ENCODE measurements at regions of chr14 and their contacts with region 1.

Region 1: DNA sequence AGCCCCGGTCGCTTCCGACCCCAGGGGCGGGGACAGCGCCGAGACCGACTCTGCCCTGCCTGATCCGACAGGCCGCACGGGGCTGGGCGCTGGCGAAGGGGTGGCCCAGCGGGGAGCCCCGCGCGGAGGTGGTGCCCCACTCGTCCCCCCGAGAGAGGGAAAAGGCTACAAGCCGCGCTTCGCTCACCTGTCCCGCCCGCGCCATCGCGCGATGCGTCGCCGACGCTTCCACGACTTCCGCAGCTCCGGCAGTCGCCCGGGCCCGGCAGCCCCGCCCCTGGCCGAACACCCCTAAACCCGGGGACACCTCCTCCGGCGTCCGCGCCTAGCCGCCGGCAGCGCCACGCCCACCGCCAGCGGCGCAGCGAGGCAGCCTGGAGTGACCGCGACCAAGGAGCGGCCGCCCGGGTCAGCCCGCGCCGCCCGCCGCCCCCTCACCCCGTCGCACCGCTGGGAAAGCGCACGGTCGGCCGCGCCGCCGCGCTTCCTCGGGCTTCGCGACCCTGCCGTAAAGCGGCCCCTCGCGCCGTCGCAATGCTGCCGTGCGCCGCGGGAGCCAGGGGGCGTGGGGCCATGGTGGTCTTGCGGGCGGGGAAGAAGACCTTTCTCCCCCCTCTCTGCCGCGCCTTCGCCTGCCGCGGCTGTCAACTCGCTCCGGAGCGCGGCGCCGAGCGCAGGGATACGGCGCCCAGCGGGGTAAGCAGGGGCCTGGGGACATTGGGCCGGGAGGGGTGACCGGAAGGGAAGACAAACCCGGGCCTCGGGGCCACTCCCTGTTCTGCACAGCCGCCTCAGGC is at the starts of genes BAG5 and COA8:
- DNase-seq: peak; percentile 61 to 92
- H3K4me3 ChIP-seq: peak within 1 kb of the TSS; percentile 82 to 97 (median 91)
- H3K27ac ChIP-seq: peak within 1 kb of the TSS; percentile 94
- H3K4me1 ChIP-seq: peaks cover 0 to 4% (median 1%) of the 10 kb centered on the region in 4 experiments; a peak in 3 of 7 replicates
- H3K27me3 ChIP-seq: no peaks in the 10 kb centered on the region
- CTCF ChIP-seq: no peak
- EP300 ChIP-seq: no peak
- POLR2A ChIP-seq: peak; percentile 28 to 76
- RAD21 ChIP-seq: no peak
- total RNA-seq, gene BAG5: 29.2 and 29.5 TPM in 2 replicates
- total RNA-seq, gene COA8: 35.0 and 35.5 TPM in 2 replicates

Region 2: GRCh38 chr14:103512701-103513611 is 49.7 kb before region 1 on chr14:
- CTCF ChIA-PET with region 1: interaction called, 14 read pairs
- POLR2A ChIA-PET with region 1: interaction called, 7 read pairs
- DNase-seq: no peak
- H3K4me3 ChIP-seq: no peak overlapping the region
- H3K27ac ChIP-seq: no peak overlapping the region
- H3K4me1 ChIP-seq: peaks cover 0 to 3% (median 2%) of the 10 kb centered on the region in 4 experiments; a peak in 3 of 7 replicates
- H3K27me3 ChIP-seq: no peaks in the 10 kb centered on the region
- CTCF ChIP-seq: peak in 1 of 3 experiments; percentile 3; a peak in 1 of 4 replicates
- EP300 ChIP-seq: no peak
- POLR2A ChIP-seq: no peak; a peak in 1 of 3 replicates
- RAD21 ChIP-seq: peak; percentile 3 to 7; a peak in 1 of 4 replicates

Region 3: DNA sequence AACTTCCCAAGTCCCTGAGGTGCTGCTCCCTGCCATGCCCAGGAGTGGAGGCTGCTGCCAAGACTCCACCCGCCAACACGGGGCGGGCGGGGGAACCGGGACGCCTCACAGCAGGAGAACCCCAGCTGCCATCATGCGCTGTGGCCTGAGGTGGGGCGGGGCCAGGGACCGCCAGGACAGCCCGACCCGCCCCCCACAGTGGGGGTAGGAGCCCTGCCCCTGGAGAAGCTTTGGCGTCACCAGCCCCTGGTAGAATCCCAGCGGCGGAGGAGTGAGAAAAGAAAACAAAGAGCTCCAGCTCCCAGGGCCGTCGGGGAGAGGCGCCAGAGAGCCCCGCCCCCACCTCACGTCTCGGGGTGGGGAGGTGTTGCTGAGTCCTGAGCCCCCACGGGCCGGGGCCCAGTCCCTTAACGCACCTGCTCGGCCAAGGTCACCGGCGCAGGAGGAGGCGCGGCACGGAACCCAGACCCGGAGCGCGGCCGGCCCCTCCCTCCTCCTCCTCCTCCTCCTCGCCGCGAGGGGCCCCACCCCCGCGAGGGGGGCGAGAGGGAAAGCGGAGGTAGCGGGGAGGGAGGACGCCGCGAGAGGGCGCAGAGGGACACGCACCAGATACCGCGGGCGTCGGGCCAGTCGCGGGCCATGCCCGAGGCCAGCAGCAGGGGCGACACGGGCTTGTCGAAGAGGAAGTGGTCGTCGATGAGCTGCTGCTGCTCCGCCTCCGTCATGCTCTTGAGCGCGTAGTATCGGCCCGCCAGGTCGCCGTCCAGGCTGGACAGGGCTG is 41.8 kb before region 1 on chr14:
- CTCF ChIA-PET with region 1: interaction called, 14 read pairs
- POLR2A ChIA-PET with region 1: interaction called, 40 read pairs
- DNase-seq: peak in 1 of 2 experiments; percentile 86
- H3K4me3 ChIP-seq: peak overlapping the region; percentile 47 to 96 (median 84)
- H3K27ac ChIP-seq: no peak overlapping the region
- H3K4me1 ChIP-seq: peaks cover 0 to 28% (median 19%) of the 10 kb centered on the region in 4 experiments; a peak in 6 of 7 replicates
- H3K27me3 ChIP-seq: peaks cover 3 to 18% (median 13%) of the 10 kb centered on the region in 4 experiments
- CTCF ChIP-seq: peak in 2 of 3 experiments; percentile 61 to 66; a peak in 3 of 4 replicates
- EP300 ChIP-seq: no peak
- POLR2A ChIP-seq: peak in 1 of 2 experiments; percentile 59; a peak in 1 of 3 replicates
- RAD21 ChIP-seq: peak; percentile 23 to 47; a peak in 3 of 4 replicates

Region 4: DNA sequence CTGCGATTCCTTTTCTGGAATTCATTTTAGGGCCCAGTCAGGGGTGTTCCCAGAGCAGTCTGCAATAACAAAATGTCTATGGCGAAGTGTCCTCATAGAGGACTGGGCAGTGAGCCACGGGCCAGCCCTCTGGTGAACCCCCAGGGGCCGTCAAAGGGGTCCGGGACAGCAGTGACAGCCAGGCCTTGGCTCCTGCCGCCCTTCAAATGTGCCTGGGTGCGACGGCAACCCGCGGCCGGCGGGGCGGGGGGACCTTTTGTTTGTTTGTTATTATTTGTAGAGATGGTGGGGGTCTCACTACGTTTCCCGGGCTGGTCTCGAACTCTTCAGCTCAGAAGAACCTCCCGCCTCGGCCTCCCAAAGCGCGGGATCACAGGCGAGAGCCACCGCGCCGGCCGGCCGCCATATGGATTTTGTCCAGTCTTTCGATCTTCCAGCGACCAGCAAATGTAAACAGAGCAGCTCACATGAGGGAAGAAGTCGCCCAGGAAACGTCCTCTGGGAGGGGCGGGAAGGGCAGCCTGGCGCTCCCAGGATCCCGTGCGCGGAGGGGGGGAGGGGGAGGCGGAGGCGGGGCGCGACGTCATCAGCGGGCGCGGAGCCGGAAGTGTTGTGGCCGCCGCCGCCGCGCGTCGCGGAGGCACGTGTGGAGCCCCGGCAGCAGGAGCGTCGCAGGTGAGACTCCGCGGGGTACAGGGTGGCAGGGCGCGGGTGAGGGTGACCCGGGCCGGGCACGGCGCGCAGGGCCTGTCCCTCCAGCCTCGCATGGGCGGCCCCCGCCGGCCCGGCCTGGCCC is 33.8 kb before region 1 on chr14 and contains the start of gene TRMT61A:
- CTCF ChIA-PET with region 1: interaction called, 3 read pairs
- POLR2A ChIA-PET with region 1: interaction called, 40 read pairs
- DNase-seq: peak in 1 of 2 experiments; percentile 83
- H3K4me3 ChIP-seq: peak within 1 kb of the TSS; percentile 61 to 97 (median 94)
- H3K27ac ChIP-seq: peak within 1 kb of the TSS; percentile 71; the same call in 1 of the 2 replicates
- H3K4me1 ChIP-seq: peaks cover 0 to 12% (median 10%) of the 10 kb centered on the region in 4 experiments; a peak in 6 of 7 replicates
- H3K27me3 ChIP-seq: peaks cover 2 to 16% (median 7%) of the 10 kb centered on the region in 4 experiments
- CTCF ChIP-seq: no peak
- EP300 ChIP-seq: no peak
- POLR2A ChIP-seq: peak in 1 of 2 experiments; percentile 59; a peak in 1 of 3 replicates
- RAD21 ChIP-seq: no peak
- total RNA-seq, gene TRMT61A: 15.1 and 15.8 TPM in 2 replicates

Region 5: GRCh38 chr14:103546652-103547454 is 15.8 kb before region 1 on chr14:
- CTCF ChIA-PET with region 1: interaction called, 34 read pairs
- POLR2A ChIA-PET with region 1: interaction called, 27 read pairs
- DNase-seq: peak in 1 of 2 experiments; percentile 98
- H3K4me3 ChIP-seq: no peak overlapping the region
- H3K27ac ChIP-seq: no peak overlapping the region
- H3K4me1 ChIP-seq: peaks cover 0 to 26% (median 22%) of the 10 kb centered on the region in 4 experiments; a peak in 6 of 7 replicates
- H3K27me3 ChIP-seq: no peaks in the 10 kb centered on the region
- CTCF ChIP-seq: peak in 2 of 3 experiments; percentile 98; a peak in 3 of 4 replicates
- EP300 ChIP-seq: no peak
- POLR2A ChIP-seq: no peak
- RAD21 ChIP-seq: peak; percentile 100

Region 6: DNA sequence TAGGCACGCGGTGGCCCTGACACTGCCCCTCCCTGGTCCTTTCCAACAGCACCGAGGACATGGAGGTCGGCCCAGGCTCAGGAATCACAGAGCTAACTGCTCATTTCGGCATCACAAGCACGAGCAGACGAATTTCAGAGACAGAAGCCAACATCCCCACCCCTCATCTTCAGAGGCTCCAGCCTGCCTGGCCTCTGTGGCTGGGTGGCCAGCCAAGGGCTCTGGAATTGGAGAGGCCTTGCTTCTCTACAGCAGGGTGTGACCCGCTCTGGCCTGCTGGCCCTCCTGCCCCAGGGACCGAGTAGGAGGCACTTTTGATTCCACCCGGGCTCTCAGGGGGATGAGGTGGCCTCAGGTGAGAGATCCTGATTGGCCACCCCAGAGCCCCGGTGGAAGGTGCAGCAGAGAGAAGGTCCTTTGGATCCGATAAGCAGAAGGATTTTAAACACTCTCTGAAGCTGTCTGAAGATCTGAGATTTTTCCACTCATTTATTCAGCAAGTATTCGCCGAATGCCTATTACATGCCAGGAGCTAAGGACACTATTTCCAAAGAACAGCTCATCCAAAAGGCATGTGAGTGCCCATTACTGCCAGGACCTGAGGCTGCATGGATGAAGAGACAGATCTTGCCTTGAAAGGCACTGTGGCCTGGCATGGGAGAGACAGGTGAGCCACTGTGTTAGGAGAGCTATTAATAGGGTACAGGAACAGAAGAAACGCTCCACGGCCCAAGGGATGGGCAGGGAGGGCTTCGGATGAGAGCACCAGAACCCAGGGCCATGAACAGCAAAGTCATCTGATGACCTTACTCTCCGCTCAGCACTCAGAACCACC is 10.4 kb before region 1 on chr14:
- CTCF ChIA-PET with region 1: interaction called, 34 read pairs
- POLR2A ChIA-PET with region 1: interaction called, 27 read pairs
- DNase-seq: no peak
- H3K4me3 ChIP-seq: no peak overlapping the region
- H3K27ac ChIP-seq: no peak overlapping the region
- H3K4me1 ChIP-seq: no peaks in the 10 kb centered on the region
- H3K27me3 ChIP-seq: no peaks in the 10 kb centered on the region
- CTCF ChIP-seq: no peak
- EP300 ChIP-seq: no peak
- POLR2A ChIP-seq: no peak
- RAD21 ChIP-seq: no peak

Region 7: GRCh38 chr14:104202259-104203070 is 639.8 kb after region 1 on chr14:
- CTCF ChIA-PET with region 1: no interaction called
- POLR2A ChIA-PET with region 1: no interaction called
- DNase-seq: no peak
- H3K4me3 ChIP-seq: no peak overlapping the region
- H3K27ac ChIP-seq: no peak overlapping the region
- H3K4me1 ChIP-seq: peaks cover 0 to 7% (median 0%) of the 10 kb centered on the region in 4 experiments; a peak in 1 of 7 replicates
- H3K27me3 ChIP-seq: no peaks in the 10 kb centered on the region
- CTCF ChIP-seq: no peak
- EP300 ChIP-seq: no peak
- POLR2A ChIP-seq: no peak
- RAD21 ChIP-seq: no peak

Measured in H1 (cell line).